ENCODE measurements at regions of chr19 and their contacts with region 1.

Region 1: GRCh38 chr19:12681074-12681951 is at the start of gene DHPS:
- DNase-seq: peak; percentile 97
- H3K4me3 Mint-ChIP-seq: peak within 1 kb of the TSS; percentile 99
- H3K27ac Mint-ChIP-seq: peak within 1 kb of the TSS; percentile 98
- H3K4me1 Mint-ChIP-seq: peaks cover 25% of the 10 kb centered on the region
- H3K27me3 Mint-ChIP-seq: no peaks in the 10 kb centered on the region
- total RNA-seq, gene DHPS: 131 to 149 TPM

Region 2: DNA sequence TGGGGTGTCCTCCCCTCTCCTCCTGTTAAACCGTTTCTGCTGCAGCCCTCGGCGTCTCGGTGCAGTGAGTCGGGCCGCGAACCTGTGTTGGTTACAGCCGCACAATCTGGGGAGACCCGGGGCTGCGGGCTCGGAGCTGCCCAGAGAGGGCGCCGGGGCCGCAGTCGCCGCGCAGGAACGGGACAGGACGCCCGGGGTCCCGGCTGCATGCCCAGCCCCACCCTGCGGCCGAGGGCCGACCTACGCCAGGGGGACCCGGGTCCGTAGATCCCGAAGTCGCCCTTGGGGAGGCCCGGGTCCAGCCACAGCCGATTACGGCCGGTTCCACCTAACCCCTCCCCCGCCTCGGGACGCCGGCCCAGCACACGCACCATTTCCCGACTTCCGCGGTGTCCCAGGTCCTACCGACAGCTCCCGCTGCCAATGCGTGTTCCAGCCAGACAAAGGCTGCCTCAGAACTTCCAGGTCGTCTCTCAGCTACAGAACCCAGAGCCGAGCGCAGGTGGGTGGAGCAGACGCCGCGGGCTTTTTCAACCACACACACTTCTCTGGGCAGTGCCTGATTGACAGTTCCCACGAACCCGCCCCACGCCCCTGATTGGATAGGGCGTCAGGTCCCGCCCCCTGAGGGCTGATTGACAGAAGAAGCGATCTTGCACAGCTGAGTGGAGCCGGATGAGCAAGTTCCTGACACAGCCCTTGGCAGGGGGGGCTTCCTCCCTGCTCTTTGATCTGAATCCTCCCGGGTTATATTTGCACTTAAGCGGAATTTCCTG is 240.6 kb before region 1 on chr19 and contains the start of gene ZNF443:
- CTCF ChIA-PET with region 1: no interaction called
- intact Hi-C with region 1: loop called (anchors 2 kb)
- DNase-seq: peak; percentile 100
- H3K4me3 Mint-ChIP-seq: peak within 1 kb of the TSS; percentile 100
- H3K27ac Mint-ChIP-seq: peak within 1 kb of the TSS; percentile 96
- H3K4me1 Mint-ChIP-seq: peaks cover 6% of the 10 kb centered on the region
- H3K27me3 Mint-ChIP-seq: no peaks in the 10 kb centered on the region
- total RNA-seq, gene ZNF443: 3.7 to 4.1 TPM

Region 3: DNA sequence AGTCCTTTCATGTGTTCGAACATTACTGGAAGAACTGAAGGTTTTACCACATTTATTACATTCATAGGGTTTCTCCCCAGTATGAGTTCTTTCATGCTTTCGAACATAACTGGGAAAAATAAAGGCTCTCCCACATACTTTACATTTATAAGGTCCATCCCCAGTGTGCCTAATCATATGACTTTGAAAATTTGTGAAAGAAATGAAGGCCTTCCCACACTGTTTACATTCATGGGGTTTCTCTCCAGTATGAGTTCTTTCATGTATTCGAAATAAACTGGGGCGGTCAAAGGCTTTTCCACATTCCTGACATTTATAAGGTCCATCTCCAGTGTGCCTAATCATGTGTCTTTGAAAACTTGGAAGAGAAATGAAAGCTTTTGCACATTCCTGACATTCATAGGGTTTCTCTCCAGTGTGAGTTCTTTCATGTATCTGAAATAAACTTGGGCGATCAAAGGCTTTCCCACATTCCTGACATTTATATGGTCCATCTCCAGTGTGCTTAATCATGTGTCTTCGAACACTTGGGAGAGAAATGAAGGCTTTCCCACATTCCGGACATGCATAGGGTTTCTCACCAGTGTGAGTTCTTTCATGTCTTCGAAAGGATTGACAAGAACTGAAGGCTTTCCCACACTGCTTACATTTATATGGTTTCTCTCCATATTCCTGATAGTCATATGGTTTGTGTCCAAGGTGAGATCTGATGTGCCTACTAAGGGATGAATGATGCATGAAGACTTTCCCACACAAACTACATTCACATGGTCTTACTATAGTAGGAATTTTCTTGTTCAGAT is 154.1 kb before region 1 on chr19:
- CTCF ChIA-PET with region 1: no interaction called
- intact Hi-C with region 1: no loop called
- DNase-seq: peak; percentile 34
- H3K4me3 Mint-ChIP-seq: no peak overlapping the region
- H3K27ac Mint-ChIP-seq: no peak overlapping the region
- H3K4me1 Mint-ChIP-seq: no peaks in the 10 kb centered on the region
- H3K27me3 Mint-ChIP-seq: no peaks in the 10 kb centered on the region

Region 4: DNA sequence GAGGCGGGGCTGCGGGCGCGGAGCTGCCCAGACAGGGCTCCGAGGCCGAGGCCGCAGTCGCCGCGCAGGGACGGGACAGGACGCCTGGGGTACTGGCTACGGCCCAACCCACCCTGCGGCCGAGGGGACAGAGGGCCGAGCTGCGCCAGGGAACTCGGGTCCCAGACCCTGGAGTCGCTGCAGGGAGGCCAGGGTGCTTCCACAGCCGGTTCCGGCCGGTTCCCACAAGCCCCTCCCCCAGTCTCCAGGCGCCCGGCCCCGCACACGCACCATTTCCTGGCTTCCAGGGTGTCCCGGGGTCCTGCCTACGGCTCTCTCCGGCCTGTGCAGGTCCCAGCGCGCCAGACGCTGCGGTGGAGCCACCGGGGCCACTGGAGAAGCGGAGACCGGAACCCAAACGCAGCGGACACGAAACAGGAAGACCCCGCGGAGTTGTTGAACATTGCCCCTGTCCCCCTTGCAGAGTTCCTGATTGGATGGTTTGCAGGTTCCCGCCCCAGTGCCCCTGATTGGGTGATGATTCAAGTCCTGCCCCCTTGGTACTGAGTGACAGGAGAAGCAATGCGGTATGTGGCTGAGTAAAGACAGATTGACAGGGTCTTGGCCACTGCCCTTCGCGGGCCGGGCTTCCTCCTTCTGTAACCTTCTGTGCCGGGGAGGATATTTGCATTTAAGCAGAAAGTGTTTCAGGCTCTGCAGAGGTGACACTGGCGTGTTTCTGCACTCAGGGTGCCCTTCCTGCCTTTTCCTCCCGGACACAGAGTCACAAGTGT is 130.1 kb before region 1 on chr19 and contains the start of gene ZNF564:
- CTCF ChIA-PET with region 1: interaction called, 4 read pairs
- intact Hi-C with region 1: loop called (anchors 1 kb)
- DNase-seq: peak; percentile 97
- H3K4me3 Mint-ChIP-seq: peak within 1 kb of the TSS; percentile 99
- H3K27ac Mint-ChIP-seq: peak within 1 kb of the TSS; percentile 96
- H3K4me1 Mint-ChIP-seq: peaks cover 37% of the 10 kb centered on the region
- H3K27me3 Mint-ChIP-seq: no peaks in the 10 kb centered on the region
- total RNA-seq, gene ZNF564: 5.6 to 5.7 TPM

Region 5: DNA sequence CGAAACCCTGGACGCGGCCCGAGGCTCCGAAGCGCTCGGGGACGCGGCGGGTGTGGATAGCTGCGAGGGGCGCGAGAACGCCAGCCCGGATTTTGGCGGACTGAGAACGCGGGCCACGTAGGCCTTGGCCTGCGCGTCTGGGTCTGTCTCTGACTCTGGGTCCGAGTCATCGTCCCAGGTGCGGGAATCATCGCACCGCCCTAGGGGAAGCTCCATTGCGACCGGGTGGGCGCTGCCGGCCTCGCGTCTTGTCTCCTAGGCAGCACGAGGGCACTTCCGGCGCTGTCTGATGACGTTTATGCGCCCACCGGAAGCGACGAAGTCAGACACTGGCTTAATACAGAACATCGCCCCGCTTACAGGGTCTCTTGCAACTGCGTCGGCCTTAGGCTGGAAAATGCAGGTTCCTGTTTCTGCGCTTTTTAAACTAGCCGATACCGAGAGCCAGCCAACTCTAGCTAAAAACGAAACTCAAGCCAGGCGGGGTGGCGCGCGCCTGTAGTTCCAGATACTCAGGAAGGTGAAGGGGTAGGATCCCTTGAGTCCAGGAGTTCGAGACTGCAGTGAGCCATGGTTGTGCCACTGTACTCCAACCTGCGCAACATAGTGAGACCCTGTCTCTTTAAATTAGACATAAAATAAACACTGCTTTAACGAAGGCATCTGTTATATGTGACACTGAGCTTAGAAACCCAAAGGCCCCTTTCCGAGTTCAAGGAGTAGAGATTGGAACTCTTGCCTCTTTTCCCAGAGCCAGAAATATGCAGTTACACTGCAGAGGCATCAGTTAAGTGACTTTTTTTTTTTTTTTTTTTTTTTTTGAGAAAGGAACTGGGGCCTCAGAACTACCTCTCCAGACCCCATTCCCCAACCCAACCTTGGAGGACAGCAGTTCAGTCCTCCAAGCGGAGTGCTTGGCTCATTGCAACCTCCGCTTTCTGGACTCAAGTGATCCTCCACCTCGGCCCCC is 15.3 kb after region 1 on chr19 and contains the start of gene FBXW9:
- CTCF ChIA-PET with region 1: interaction called, 4 read pairs
- intact Hi-C with region 1: loop called (anchors 1 kb)
- DNase-seq: peak; percentile 98
- H3K4me3 Mint-ChIP-seq: peak within 1 kb of the TSS; percentile 91
- H3K27ac Mint-ChIP-seq: peak within 1 kb of the TSS; percentile 91
- H3K4me1 Mint-ChIP-seq: peaks cover 11% of the 10 kb centered on the region
- H3K27me3 Mint-ChIP-seq: no peaks in the 10 kb centered on the region
- total RNA-seq, gene FBXW9: 7.2 to 8.7 TPM

Region 6: GRCh38 chr19:12736995-12737834 is 55.9 kb after region 1 on chr19 and contains the start of gene GET3:
- CTCF ChIA-PET with region 1: no interaction called
- intact Hi-C with region 1: loop called (anchors 1 kb)
- DNase-seq: peak; percentile 90
- H3K4me3 Mint-ChIP-seq: peak within 1 kb of the TSS; percentile 100
- H3K27ac Mint-ChIP-seq: peak within 1 kb of the TSS; percentile 90
- H3K4me1 Mint-ChIP-seq: peaks cover 31% of the 10 kb centered on the region
- H3K27me3 Mint-ChIP-seq: no peaks in the 10 kb centered on the region
- total RNA-seq, gene GET3: 47.7 TPM

Region 7: DNA sequence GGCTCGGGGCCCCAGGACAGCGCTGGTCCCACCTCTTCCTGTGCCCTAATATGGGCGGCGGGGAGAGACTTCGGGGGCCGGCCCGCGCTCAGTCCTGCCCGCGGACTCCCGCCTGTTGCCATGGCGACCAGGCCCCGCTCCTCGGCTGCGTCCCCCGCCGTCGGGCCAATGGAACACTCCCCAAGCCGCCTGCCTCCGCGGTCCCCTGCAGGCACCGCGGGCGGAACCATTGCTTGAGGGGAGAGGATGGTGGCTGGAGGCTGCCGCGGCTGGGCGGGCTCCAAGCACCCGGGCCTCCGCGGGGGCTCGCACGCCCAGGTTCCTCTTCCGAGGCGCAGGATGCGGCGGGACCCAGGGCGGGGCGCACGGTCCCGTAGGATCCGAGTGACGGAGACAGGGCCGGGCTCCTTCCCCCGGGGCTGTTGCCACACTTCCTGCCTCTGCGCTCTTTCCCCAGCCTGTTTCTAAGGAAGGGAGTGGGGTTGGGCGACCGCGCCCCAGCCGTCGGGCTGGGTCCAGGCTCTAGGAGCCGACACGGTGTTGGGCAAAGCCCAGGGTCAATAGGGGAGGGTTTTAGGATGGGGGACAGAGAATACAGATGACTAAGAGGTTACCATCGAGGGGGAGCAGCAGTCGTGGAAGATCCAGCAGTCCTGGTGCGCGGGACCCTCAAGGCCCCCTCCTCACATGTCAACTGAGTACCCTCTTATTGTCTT is 108.7 kb after region 1 on chr19:
- CTCF ChIA-PET with region 1: no interaction called
- intact Hi-C with region 1: loop called (anchors 1 kb)
- DNase-seq: peak; percentile 97
- H3K4me3 Mint-ChIP-seq: peak overlapping the region; percentile 97
- H3K27ac Mint-ChIP-seq: peak overlapping the region; percentile 96
- H3K4me1 Mint-ChIP-seq: peaks cover 25% of the 10 kb centered on the region
- H3K27me3 Mint-ChIP-seq: no peaks in the 10 kb centered on the region